Ascending aorta (tissue), 2 donors: ENCODE measurements at regions of chr3 and their contacts with region 1.

Region 1: GRCh38 chr3:161423911-161424522 is 52.7 kb upstream of the SPTSSB start:
- DNase-seq: no peak
- H3K4me3 ChIP-seq: no peak overlapping the region
- H3K27ac ChIP-seq: no peak overlapping the region
- H3K4me1 ChIP-seq: no peaks in the 10 kb centered on the region
- H3K27me3 ChIP-seq: no peaks in the 10 kb centered on the region
- CTCF ChIP-seq: peak; percentile 56 to 75 (median 72)

Region 2: GRCh38 chr3:160707187-160707794 is 716.7 kb before region 1 on chr3:
- intact Hi-C with region 1: loop called (anchors 10 kb)
- DNase-seq: no peak
- H3K4me3 ChIP-seq: no peak overlapping the region
- H3K27ac ChIP-seq: no peak overlapping the region
- H3K4me1 ChIP-seq: no peaks in the 10 kb centered on the region
- H3K27me3 ChIP-seq: no peaks in the 10 kb centered on the region
- CTCF ChIP-seq: peak in 2 of 3 experiments; percentile 56 to 62

Region 3: GRCh38 chr3:160921020-160921635 is 502.9 kb before region 1 on chr3:
- intact Hi-C with region 1: loop called (anchors 10 kb)
- DNase-seq: no peak
- H3K4me3 ChIP-seq: no peak overlapping the region
- H3K27ac ChIP-seq: no peak overlapping the region
- H3K4me1 ChIP-seq: no peaks in the 10 kb centered on the region
- H3K27me3 ChIP-seq: no peaks in the 10 kb centered on the region
- CTCF ChIP-seq: peak; percentile 59 to 92 (median 79)

Region 4: DNA sequence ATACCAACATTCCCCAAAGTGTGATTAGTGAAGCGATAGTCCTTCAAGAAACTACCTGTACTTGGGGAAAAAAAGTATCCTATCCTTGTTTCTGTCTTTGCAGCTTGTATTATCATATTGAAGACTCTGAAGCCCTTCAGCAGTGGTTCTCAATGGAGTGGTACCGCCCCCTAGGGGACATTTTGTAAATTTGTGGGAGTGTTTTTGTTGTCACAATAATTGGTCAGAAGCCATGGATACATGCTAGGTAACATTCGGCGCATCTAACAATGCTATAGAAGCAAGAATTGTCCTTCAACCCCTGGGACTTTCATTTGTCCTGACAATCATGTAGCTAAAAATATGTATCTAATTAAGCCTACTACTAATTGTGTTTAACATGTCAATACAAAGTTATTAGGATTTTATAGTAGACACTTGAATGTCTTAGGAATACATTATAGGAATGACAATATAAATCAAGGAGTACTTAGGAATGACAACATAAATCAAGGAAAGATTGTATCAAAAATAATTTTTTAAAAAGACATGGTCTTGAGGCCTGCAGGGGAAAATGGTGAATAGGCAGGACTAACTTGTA is 149.2 kb before region 1 on chr3:
- intact Hi-C with region 1: loop called (anchors 1 kb)
- DNase-seq: no peak
- H3K4me3 ChIP-seq: no peak overlapping the region
- H3K27ac ChIP-seq: no peak overlapping the region
- H3K4me1 ChIP-seq: no peaks in the 10 kb centered on the region
- H3K27me3 ChIP-seq: no peaks in the 10 kb centered on the region
- CTCF ChIP-seq: peak in 2 of 3 experiments; percentile 35 to 44

Region 5: GRCh38 chr3:161475901-161476300 is 51.9 kb after region 1 on chr3:
- intact Hi-C with region 1: no loop called
- DNase-seq: no peak
- H3K4me3 ChIP-seq: no peak overlapping the region
- H3K27ac ChIP-seq: no peak overlapping the region
- H3K4me1 ChIP-seq: no peaks in the 10 kb centered on the region
- H3K27me3 ChIP-seq: no peaks in the 10 kb centered on the region
- CTCF ChIP-seq: no peak